ENCODE measurements at regions of chr15 and their contacts with region 1.

Region 1: DNA sequence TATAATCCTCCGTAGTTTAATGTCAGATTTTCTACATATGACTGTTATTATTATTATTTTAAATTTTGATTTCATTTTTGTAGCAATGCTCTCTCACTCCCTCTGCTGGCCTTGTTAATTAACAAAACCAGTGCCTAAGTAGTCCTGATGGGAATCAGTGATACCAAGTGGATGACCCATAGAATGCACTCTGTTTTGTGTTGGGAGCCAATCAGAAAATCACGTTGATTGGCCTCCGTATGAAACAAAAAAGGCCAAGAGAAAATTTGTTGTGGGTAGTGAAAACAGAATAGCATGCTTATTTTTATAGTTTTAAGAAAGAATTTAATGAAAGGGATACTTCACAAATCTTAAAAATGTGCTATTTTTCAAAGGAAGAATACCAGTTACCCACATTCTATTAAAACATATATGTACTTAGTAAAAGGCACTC is 34.4 kb upstream of the MEIS2 start:
- DNase-seq: peak; percentile 64
- H3K4me3 Mint-ChIP-seq: no peak overlapping the region
- H3K27ac Mint-ChIP-seq: no peak overlapping the region
- H3K4me1 Mint-ChIP-seq: peaks cover 9% of the 10 kb centered on the region
- H3K27me3 Mint-ChIP-seq: peaks cover 47% of the 10 kb centered on the region
- CTCF ChIP-seq: no peak

Region 2: GRCh38 chr15:35519541-35520149 is 1615.1 kb before region 1 on chr15:
- CTCF ChIA-PET with region 1: interaction called, 4 read pairs
- POLR2A ChIA-PET with region 1: no interaction called
- intact Hi-C with region 1: loop called (anchors 10 kb)
- DNase-seq: peak; percentile 64
- H3K4me3 Mint-ChIP-seq: no peak overlapping the region
- H3K27ac Mint-ChIP-seq: no peak overlapping the region
- H3K4me1 Mint-ChIP-seq: peaks cover 6% of the 10 kb centered on the region
- H3K27me3 Mint-ChIP-seq: no peaks in the 10 kb centered on the region
- CTCF ChIP-seq: peak; percentile 53

Region 3: GRCh38 chr15:36645106-36645505 is 489.6 kb before region 1 on chr15:
- CTCF ChIA-PET with region 1: no interaction called
- POLR2A ChIA-PET with region 1: no interaction called
- intact Hi-C with region 1: loop called (anchors 10 kb)
- DNase-seq: no peak
- H3K4me3 Mint-ChIP-seq: no peak overlapping the region
- H3K27ac Mint-ChIP-seq: no peak overlapping the region
- H3K4me1 Mint-ChIP-seq: peaks cover 8% of the 10 kb centered on the region
- H3K27me3 Mint-ChIP-seq: no peaks in the 10 kb centered on the region
- CTCF ChIP-seq: no peak

Region 4: DNA sequence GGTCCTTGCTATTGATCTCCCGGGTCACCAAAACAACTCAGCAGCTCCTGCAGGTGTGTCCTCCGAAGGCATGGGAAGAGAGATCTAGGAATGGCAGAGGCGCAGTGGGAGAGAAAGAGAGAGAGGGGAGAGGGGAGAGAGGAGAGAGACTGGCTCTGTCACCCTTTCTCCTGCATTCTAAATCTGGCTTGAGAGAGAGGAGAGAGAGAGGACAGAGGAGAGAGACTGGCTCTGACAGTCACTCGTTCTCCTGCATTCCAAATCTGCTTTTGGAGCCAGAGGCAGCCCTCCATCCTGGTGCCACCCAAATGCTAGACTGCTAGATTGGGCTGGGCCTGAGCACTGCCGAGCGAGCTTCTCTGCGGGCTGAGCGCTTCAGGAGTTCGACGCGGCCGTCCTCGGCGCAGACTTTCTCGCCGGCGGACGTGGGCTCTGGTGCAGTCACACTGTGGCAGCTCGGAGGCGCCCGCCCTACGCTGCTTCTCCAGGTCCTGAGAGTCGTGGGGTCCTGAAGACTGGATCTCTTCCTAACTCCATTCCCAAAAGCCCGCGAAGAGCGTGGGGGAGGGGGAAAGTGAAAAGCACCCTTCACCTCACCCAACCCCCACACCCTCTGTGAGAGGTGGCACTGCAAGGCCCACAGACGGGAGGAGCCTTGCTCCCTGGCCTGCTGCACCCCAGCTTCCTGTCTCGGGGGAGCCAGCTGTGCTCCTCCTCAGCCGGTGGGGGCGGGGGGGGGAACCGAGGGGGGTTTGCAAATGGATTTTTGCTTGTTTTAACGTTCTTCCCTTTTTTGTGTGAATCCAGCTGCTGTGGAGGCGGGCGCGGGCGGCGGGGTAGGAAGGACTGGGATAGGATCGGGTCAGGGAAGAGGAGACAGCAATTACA is 256.7 kb before region 1 on chr15:
- CTCF ChIA-PET with region 1: interaction called, 37 read pairs
- POLR2A ChIA-PET with region 1: no interaction called
- intact Hi-C with region 1: loop called (anchors 1 kb)
- DNase-seq: no peak
- H3K4me3 Mint-ChIP-seq: no peak overlapping the region
- H3K27ac Mint-ChIP-seq: no peak overlapping the region
- H3K4me1 Mint-ChIP-seq: peaks cover 4% of the 10 kb centered on the region
- H3K27me3 Mint-ChIP-seq: peaks cover 87% of the 10 kb centered on the region
- CTCF ChIP-seq: no peak

Region 5: DNA sequence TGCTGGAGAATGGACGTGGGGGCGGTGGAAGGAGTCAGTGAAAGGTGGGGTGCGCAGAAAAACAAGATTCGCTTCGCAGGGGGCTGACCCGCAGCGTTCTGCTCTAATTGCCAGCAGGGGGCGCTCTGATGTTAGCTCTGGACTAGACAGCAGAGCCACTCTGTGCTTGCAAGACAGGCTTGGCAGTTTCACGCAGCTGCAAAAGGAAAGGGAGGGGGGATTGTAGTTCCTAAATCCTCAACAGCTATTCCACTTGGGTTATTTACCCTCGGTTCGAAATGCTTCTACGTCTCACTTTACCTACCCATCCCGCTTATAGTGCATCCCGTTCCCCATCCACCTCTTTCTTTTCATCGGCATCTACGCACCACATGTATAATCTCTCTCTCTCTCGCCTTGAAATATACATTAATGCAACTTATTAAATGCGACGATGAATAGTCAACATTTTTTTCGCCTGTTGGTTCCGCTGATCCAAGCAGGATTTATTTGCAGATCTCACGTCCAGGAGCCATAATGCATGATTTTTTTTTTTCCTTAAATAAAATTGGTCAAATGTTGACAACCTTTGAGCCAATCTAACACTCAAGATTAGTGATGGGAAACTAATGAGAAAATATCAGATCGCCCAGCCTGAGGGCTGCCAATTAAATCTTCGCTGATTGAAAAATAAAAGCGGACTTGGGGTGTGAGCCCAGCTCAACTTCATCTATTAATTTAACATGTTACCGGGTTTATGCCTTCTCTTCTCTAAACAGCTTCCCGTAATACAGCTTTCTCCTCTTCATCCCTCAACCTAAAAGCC is 250.8 kb before region 1 on chr15:
- CTCF ChIA-PET with region 1: interaction called, 37 read pairs
- POLR2A ChIA-PET with region 1: interaction called, 3 read pairs
- intact Hi-C with region 1: loop called (anchors 1 kb)
- DNase-seq: peak; percentile 83
- H3K4me3 Mint-ChIP-seq: peak overlapping the region; percentile 23
- H3K27ac Mint-ChIP-seq: no peak overlapping the region
- H3K4me1 Mint-ChIP-seq: peaks cover 10% of the 10 kb centered on the region
- H3K27me3 Mint-ChIP-seq: peaks cover 65% of the 10 kb centered on the region
- CTCF ChIP-seq: peak; percentile 85

Region 6: DNA sequence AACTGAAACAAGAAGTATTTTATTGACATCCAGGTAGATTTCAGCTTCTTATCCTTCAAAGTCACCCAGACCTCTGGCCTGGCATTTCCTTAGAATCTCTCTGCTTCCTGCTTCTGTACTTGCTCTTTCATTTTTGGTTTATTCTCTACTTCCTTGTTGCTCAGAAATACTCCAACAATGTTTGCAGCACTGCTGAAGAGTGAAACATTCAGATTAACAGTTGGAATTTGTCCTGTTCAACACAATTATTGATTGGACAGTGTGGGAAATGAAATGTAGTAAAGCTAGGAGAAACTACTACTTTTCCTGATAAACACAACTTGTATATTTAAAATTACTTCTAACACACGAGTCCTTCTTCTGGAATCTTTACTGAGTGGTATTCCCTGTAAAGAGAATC is 46.6 kb after region 1 on chr15:
- CTCF ChIA-PET with region 1: no interaction called
- POLR2A ChIA-PET with region 1: no interaction called
- intact Hi-C with region 1: no loop called
- DNase-seq: no peak
- H3K4me3 Mint-ChIP-seq: no peak overlapping the region
- H3K27ac Mint-ChIP-seq: no peak overlapping the region
- H3K4me1 Mint-ChIP-seq: no peaks in the 10 kb centered on the region
- H3K27me3 Mint-ChIP-seq: no peaks in the 10 kb centered on the region
- CTCF ChIP-seq: no peak